K562 (cell line): ENCODE measurements at regions of chr5 and their contacts with region 1.

Region 1: GRCh38 chr5:146440870-146441495 is 6.2 kb upstream of the TCERG1 start:
- DNase-seq: no peak
- ATAC-seq: peak; percentile 50; the same call in 2 of the 3 replicates
- H3K4me3 ChIP-seq: no peak overlapping the region
- H3K27ac ChIP-seq: no peak overlapping the region
- H3K4me1 ChIP-seq: no peaks in the 10 kb centered on the region
- H3K27me3 ChIP-seq: peaks cover 5 to 10% of the 10 kb centered on the region in 2 experiments; a peak in 3 of 5 replicates
- CTCF ChIP-seq: no peak
- EP300 ChIP-seq: no peak
- POLR2A ChIP-seq: no peak
- RAD21 ChIP-seq: no peak

Region 2: DNA sequence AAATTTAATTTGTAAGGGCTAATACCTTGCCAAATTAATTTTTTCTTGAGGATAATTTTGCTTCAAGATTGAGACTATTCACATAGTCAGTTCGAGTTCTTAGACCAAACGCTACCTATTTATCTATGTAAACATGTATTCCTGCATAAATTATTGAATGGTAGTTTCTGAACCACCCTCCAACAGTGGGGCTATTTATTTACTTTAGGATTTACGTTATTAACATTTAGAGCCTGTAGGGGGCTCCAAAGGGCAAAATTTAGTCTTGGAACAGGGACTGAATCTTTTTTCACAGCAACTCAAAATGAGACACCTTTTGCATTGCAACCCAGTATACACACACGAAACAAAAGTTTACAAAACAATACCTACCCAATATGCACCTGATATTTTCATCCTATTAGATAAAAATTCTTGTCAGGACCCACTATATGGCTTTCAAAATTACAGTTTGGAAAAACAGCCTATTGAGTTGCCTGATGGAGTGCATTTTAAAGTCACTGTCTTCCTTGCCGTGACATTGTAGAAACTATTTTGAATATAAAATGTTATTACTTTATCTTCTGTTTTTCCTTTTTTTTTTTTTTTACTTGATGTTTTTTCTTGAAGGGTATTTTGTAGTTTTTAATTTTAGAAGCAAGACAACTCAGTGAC is 149.4 kb before region 1 on chr5:
- CTCF ChIA-PET with region 1: no interaction called
- POLR2A ChIA-PET with region 1: no interaction called
- in situ Hi-C with region 1: loop called (anchors 5 kb)
- intact Hi-C with region 1: no loop called
- DNase-seq: peak; percentile 50 to 72 (median 54)
- ATAC-seq: peak; percentile 92
- H3K4me3 ChIP-seq: no peak overlapping the region
- H3K27ac ChIP-seq: no peak overlapping the region
- H3K4me1 ChIP-seq: 0 out of 5 replicates have a peak, but pooled peaks cover 0 to 5% of the 10 kb centered on the region in 2 experiments
- H3K27me3 ChIP-seq: no peaks in the 10 kb centered on the region
- CTCF ChIP-seq: peak; percentile 58 to 81 (median 66); a peak in 5 of 6 replicates
- EP300 ChIP-seq: no peak
- POLR2A ChIP-seq: no peak
- RAD21 ChIP-seq: peak; percentile 48 to 60